Common myeloid progenitor, CD34-positive (primary cell): ENCODE measurements at regions of chr20 and their contacts with region 1.

Region 1: GRCh38 chr20:44609511-44610312 is 27.3 kb downstream of the PKIG start:
- DNase-seq: peak; percentile 83 to 85 (median 83)
- H3K4me3 ChIP-seq: peak overlapping the region in 6 of 7 experiments; percentile 8 to 62 (median 30)
- H3K27ac ChIP-seq: peak overlapping the region; percentile 74 to 82
- H3K4me1 ChIP-seq: peaks cover 14 to 55% (median 33%) of the 10 kb centered on the region in 4 experiments
- H3K27me3 ChIP-seq: no peaks in the 10 kb centered on the region

Region 2: DNA sequence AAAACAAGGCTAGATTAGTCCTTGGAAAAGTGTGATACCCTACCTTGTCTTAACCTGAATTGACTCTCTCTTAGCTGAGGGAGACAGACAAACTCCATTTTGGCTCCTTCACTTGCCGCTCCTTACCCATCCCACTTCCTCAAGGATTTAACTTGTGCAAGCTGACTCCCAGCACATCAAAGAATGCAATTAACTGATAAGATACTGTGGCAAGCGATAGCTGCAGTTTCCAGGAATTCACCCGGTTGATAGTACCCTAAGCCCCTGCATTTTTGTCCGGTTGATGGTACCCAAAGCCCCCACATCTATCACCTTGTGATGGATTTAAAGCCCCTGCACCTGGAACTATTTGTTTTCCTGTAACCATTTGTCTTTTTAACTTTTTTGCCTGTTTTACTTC is 86.0 kb before region 1 on chr20:
- CTCF ChIA-PET with region 1: interaction called, 11 read pairs
- POLR2A ChIA-PET with region 1: interaction called, 5 read pairs
- DNase-seq: no peak
- H3K4me3 ChIP-seq: no peak overlapping the region
- H3K27ac ChIP-seq: peak overlapping the region in 1 of 2 experiments; percentile 100
- H3K4me1 ChIP-seq: peaks cover 11 to 36% (median 24%) of the 10 kb centered on the region in 4 experiments
- H3K27me3 ChIP-seq: no peaks in the 10 kb centered on the region

Region 3: GRCh38 chr20:44537993-44538392 is 71.7 kb before region 1 on chr20:
- CTCF ChIA-PET with region 1: interaction called, 20 read pairs
- POLR2A ChIA-PET with region 1: interaction called, 3 read pairs
- DNase-seq: no peak
- H3K4me3 ChIP-seq: no peak overlapping the region
- H3K27ac ChIP-seq: no peak overlapping the region
- H3K4me1 ChIP-seq: peaks cover 0 to 41% (median 17%) of the 10 kb centered on the region in 4 experiments
- H3K27me3 ChIP-seq: no peaks in the 10 kb centered on the region

Region 4: DNA sequence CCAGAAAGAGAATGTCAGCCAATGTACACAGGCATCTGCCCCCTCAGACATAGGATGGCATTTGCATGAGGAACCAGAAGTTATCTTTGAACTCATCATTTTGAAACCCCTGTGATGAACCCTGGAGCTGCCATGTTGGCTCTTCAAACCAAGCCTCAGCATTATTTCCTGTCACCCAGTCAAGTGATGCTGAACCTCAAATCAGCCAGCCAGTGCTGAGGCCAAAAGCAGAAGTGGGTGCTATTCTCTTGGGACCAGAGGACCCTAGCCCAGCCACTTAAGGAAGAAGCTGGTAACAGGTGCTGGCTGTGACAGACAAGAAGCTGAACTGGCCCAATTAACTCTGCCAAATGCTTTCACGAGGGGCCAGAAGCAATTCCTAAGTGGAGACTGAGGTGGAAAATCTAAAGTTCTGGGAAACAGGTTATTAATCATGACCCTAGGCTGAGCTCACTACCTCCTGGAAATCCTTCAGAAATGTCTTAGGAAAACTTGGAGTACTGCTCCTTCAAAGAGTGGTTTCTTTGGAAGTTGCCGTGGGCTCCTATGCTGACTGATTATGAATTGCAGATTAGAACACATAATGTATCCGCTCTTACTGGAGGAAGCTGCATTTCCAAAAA is 23.3 kb before region 1 on chr20:
- CTCF ChIA-PET with region 1: interaction called, 18 read pairs
- POLR2A ChIA-PET with region 1: no interaction called
- DNase-seq: peak; percentile 62 to 93 (median 89)
- H3K4me3 ChIP-seq: no peak overlapping the region
- H3K27ac ChIP-seq: peak overlapping the region in 1 of 2 experiments; percentile 25
- H3K4me1 ChIP-seq: peaks cover 15 to 33% (median 21%) of the 10 kb centered on the region in 4 experiments
- H3K27me3 ChIP-seq: no peaks in the 10 kb centered on the region

Region 5: DNA sequence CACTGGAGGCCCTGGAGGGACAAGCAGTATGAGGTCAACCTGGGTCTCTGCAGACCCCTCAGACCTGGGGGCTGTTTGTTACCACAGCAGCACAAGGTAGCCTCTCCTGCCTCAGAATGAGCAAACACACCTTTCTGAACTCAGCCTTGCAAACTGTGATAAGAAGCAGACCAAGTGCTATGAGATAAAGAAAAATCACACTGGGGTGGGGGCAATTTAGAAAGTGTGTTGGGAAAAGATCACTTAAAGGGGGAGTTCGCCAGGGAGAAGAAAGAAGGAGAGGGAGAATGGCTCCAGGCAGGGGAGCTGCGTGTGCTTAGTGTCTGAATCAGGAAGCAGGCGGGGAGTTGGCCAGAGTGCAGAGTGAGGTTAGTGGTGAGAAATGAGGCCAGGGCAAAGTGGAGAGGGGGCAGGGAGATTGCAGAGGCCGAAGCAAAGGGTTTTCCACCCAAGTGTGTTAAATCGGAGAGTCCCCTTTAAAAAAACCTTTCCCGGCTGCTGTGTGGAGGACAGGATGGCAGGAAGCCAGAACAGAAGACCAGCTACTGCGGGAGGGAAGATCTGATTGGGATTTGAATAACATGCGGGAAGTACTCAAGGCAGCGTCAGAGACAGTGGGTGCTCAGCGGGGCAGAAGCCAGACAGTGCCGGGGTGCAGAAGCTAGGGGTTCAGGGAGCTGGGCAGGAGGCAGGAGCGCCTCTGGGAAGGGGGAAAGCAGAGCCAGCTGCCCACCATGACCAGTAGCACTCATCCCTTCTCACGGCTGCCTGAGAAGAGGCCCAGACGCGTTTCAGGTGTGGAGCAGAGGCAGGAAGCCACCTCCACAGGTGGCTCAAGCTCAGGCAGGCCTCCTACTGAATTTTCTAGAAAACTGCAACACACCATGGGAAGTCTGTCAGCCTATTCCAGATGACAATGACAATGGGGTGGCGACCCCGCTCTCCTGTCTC is 32.8 kb after region 1 on chr20:
- CTCF ChIA-PET with region 1: interaction called, 29 read pairs
- POLR2A ChIA-PET with region 1: interaction called, 13 read pairs
- DNase-seq: peak in 2 of 3 donors; percentile 53 to 65
- H3K4me3 ChIP-seq: peak overlapping the region in 4 of 7 experiments; percentile 40 to 54 (median 47)
- H3K27ac ChIP-seq: peak overlapping the region; percentile 35 to 69
- H3K4me1 ChIP-seq: peaks cover 16 to 69% (median 62%) of the 10 kb centered on the region in 4 experiments
- H3K27me3 ChIP-seq: no peaks in the 10 kb centered on the region

Region 6: DNA sequence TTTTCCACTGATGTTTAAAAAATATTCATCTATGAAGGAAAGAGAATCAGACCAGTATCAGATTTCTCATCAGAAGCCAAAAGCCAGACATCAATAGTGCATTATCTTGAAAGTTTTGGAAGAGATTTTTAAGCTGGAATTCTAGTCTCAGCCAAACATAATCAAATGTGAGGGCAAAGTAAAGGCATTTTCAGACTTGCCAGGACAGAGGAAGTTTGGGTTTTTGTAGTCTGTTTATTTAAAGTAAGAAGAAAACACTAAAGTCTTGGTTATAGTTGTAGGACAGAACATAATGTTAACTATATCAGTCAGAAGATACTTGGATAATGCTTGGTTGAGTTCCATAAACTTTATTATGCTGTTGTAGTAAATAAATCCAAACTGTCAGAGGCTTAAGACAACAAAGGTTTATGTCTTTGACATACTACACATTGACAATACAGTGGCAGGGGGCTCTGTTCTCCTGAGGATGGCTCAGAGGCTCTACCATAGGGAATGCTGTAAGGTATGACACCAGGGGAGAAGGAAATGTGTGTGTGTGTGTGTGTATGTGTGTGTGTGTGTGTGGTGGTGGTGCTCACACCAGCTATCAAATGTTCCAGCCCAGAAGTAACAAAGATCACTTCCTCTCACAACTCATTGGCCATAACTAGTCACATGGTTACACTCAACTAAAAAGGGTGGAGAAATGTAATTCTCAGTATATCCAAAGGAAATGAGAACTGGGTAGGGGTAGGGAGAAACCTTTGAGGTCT is 249.1 kb after region 1 on chr20:
- CTCF ChIA-PET with region 1: no interaction called
- POLR2A ChIA-PET with region 1: no interaction called
- DNase-seq: peak in 2 of 3 donors; percentile 26 to 47
- H3K4me3 ChIP-seq: no peak overlapping the region
- H3K27ac ChIP-seq: no peak overlapping the region
- H3K4me1 ChIP-seq: peaks cover 0 to 4% (median 1%) of the 10 kb centered on the region in 4 experiments
- H3K27me3 ChIP-seq: peaks cover 0 to 3% (median 0%) of the 10 kb centered on the region in 5 experiments

Region 7: GRCh38 chr20:45293041-45294002 is 683.6 kb after region 1 on chr20:
- CTCF ChIA-PET with region 1: no interaction called
- POLR2A ChIA-PET with region 1: no interaction called
- DNase-seq: peak; percentile 70 to 86 (median 84)
- H3K4me3 ChIP-seq: peak overlapping the region; percentile 13 to 75 (median 60)
- H3K27ac ChIP-seq: no peak overlapping the region
- H3K4me1 ChIP-seq: peaks cover 0 to 9% (median 8%) of the 10 kb centered on the region in 4 experiments
- H3K27me3 ChIP-seq: peaks cover 3 to 39% (median 16%) of the 10 kb centered on the region in 5 experiments